A673 (cell line): ENCODE measurements at regions of chr21 and their contacts with region 1.

Region 1: DNA sequence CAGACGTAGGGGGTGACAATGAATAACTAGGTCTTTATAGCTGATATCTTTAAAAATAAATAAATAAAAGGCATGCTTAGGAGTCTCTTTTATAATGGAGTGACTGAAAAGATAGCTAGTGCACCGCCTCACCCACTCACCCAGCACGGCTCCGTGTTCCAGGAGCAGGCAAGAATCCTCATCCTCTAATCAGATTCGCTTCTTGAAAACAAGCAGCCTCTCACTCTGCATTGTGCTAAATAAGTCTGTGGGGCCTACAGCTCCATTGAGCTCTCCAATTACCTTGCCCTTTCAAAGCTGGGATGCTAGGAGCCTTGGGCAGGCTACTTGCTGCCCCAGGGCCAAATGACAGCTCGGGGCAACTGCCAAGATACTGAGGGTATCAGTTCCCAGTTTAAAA is 91.5 kb downstream of the TIAM1 start:
- DNase-seq: no peak
- H3K4me3 ChIP-seq: no peak overlapping the region
- H3K27ac ChIP-seq: no peak overlapping the region
- H3K4me1 ChIP-seq: no peaks in the 10 kb centered on the region
- H3K27me3 ChIP-seq: no peaks in the 10 kb centered on the region
- CTCF ChIP-seq: no peak

Region 2: GRCh38 chr21:31310750-31311149 is 58.1 kb after region 1 on chr21:
- CTCF ChIA-PET with region 1: no interaction called
- POLR2A ChIA-PET with region 1: no interaction called
- intact Hi-C with region 1: no loop called
- DNase-seq: no peak
- H3K4me3 ChIP-seq: no peak overlapping the region
- H3K27ac ChIP-seq: no peak overlapping the region
- H3K4me1 ChIP-seq: no peaks in the 10 kb centered on the region
- H3K27me3 ChIP-seq: no peaks in the 10 kb centered on the region
- CTCF ChIP-seq: no peak

Region 3: GRCh38 chr21:31558962-31559367 is 306.4 kb after region 1 on chr21:
- CTCF ChIA-PET with region 1: no interaction called
- POLR2A ChIA-PET with region 1: interaction called, 16 read pairs
- intact Hi-C with region 1: no loop called
- DNase-seq: peak; percentile 95
- H3K4me3 ChIP-seq: peak overlapping the region; percentile 59
- H3K27ac ChIP-seq: peak overlapping the region; percentile 53
- H3K4me1 ChIP-seq: peaks cover 32% of the 10 kb centered on the region
- H3K27me3 ChIP-seq: peaks cover 23% of the 10 kb centered on the region
- CTCF ChIP-seq: peak; percentile 32; the same call in 1 of the 2 replicates